ENCODE measurements at regions of chr4 and their contacts with region 1.

Region 1: DNA sequence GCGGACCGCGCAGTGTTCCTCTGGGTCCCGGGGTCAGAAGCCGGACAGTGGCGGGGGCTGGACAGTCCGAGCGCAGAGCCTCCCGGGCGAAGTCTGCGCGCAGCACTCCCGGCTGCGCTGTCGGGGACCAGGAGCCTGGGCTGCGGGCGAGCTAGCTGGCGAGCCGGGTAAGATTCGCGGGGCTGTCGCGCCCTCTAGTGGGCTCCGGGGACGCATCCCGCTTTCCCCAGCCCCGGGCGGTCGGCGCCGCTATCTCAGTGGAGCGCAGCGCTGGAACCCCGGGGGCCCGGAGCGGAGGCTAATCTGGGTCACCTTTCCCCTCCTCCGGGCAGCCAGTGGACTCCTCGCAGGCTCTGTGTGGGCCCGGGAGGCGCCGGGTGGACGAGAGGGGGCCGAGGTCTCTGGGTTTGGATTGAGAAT is 4.2 kb downstream of the PDGFRA start:
- DNase-seq: peak; percentile 42 to 81 (median 71)
- ATAC-seq: peak; percentile 78
- H3K4me3 ChIP-seq: peak overlapping the region; percentile 42 to 47
- H3K4me3 Mint-ChIP-seq: peak overlapping the region; percentile 86
- H3K27ac ChIP-seq: no peak overlapping the region
- H3K27ac Mint-ChIP-seq: no peak overlapping the region
- H3K4me1 ChIP-seq: peaks cover 36% of the 10 kb centered on the region
- H3K4me1 Mint-ChIP-seq: peaks cover 23% of the 10 kb centered on the region
- H3K27me3 ChIP-seq: peaks cover 18 to 28% of the 10 kb centered on the region in 2 experiments
- H3K27me3 Mint-ChIP-seq: peaks cover 57% of the 10 kb centered on the region
- CTCF ChIP-seq: peak; percentile 67

Region 2: GRCh38 chr4:52376132-52376704 is 1857.1 kb before region 1 on chr4:
- CTCF ChIA-PET with region 1: interaction called, 18 read pairs
- POLR2A ChIA-PET with region 1: no interaction called
- intact Hi-C with region 1: loop called in 1 of 2 experiments (anchors 2 kb)
- DNase-seq: peak in 2 of 9 experiments; percentile 33 to 39
- ATAC-seq: no peak
- H3K4me3 ChIP-seq: no peak overlapping the region
- H3K4me3 Mint-ChIP-seq: no peak overlapping the region
- H3K27ac ChIP-seq: no peak overlapping the region
- H3K27ac Mint-ChIP-seq: no peak overlapping the region
- H3K4me1 ChIP-seq: no peaks in the 10 kb centered on the region
- H3K4me1 Mint-ChIP-seq: no peaks in the 10 kb centered on the region
- H3K27me3 ChIP-seq: no peaks in the 10 kb centered on the region
- H3K27me3 Mint-ChIP-seq: peaks cover 7% of the 10 kb centered on the region
- CTCF ChIP-seq: peak; percentile 71

Region 3: DNA sequence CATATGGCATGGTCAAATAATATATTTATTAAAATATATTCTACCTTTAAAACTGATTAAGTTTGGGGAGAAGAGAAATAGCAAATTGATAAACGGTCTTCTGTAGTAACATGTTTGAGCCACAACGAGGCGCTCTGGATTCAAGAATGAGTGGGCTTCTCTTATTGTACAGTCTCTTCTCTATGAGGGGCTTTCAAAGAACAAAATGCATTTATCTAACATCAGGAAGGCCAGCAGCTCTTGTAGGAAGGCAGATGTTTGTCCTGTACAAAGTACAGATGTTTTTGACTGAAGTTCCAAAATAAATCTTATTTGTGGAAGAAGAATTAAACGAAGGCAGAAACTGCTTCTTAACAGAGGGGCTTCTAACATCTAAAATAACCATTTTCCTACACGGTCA is 1217.6 kb before region 1 on chr4:
- CTCF ChIA-PET with region 1: interaction called, 3 read pairs
- POLR2A ChIA-PET with region 1: no interaction called
- intact Hi-C with region 1: loop called (anchors 5 to 10 kb)
- DNase-seq: peak in 1 of 9 experiments; percentile 13
- ATAC-seq: no peak
- H3K4me3 ChIP-seq: no peak overlapping the region
- H3K4me3 Mint-ChIP-seq: no peak overlapping the region
- H3K27ac ChIP-seq: no peak overlapping the region
- H3K27ac Mint-ChIP-seq: no peak overlapping the region
- H3K4me1 ChIP-seq: peaks cover 12% of the 10 kb centered on the region
- H3K4me1 Mint-ChIP-seq: peaks cover 34% of the 10 kb centered on the region
- H3K27me3 ChIP-seq: no peaks in the 10 kb centered on the region
- H3K27me3 Mint-ChIP-seq: no peaks in the 10 kb centered on the region
- CTCF ChIP-seq: no peak

Region 4: GRCh38 chr4:53490965-53491622 is 742.2 kb before region 1 on chr4:
- CTCF ChIA-PET with region 1: no interaction called
- POLR2A ChIA-PET with region 1: no interaction called
- intact Hi-C with region 1: loop called in 1 of 2 experiments (anchors 5 kb)
- DNase-seq: no peak
- ATAC-seq: no peak
- H3K4me3 ChIP-seq: no peak overlapping the region
- H3K4me3 Mint-ChIP-seq: no peak overlapping the region
- H3K27ac ChIP-seq: no peak overlapping the region
- H3K27ac Mint-ChIP-seq: no peak overlapping the region
- H3K4me1 ChIP-seq: no peaks in the 10 kb centered on the region
- H3K4me1 Mint-ChIP-seq: no peaks in the 10 kb centered on the region
- H3K27me3 ChIP-seq: no peaks in the 10 kb centered on the region
- H3K27me3 Mint-ChIP-seq: peaks cover 5% of the 10 kb centered on the region
- CTCF ChIP-seq: peak; percentile 20

Region 5: DNA sequence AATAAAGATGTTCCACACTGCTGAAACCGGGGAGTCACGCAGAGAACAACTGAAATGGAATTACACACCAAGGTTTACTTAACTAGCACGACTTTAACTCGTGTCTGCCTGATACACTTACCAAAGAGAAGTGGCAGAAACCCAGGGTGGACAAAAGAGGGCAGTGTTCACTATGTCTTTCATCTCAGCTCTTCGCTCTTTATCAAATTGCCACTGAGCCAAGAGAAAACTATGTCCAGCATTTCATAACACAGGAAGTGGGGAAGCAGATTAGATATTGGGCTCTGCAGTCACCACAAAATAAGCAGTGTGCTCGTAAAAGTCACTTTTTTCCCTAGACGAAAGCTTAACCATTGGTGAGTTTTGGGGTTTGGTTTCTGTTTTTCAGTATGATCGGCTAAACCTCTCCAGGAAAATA is 324.6 kb before region 1 on chr4:
- CTCF ChIA-PET with region 1: interaction called, 45 read pairs
- POLR2A ChIA-PET with region 1: no interaction called
- intact Hi-C with region 1: loop called in 1 of 2 experiments (anchors 1 kb)
- DNase-seq: peak in 2 of 9 experiments; percentile 31 to 48
- ATAC-seq: no peak
- H3K4me3 ChIP-seq: no peak overlapping the region
- H3K4me3 Mint-ChIP-seq: no peak overlapping the region
- H3K27ac ChIP-seq: no peak overlapping the region
- H3K27ac Mint-ChIP-seq: no peak overlapping the region
- H3K4me1 ChIP-seq: peaks cover 7% of the 10 kb centered on the region
- H3K4me1 Mint-ChIP-seq: peaks cover 13% of the 10 kb centered on the region
- H3K27me3 ChIP-seq: peaks cover 0 to 8% of the 10 kb centered on the region in 2 experiments
- H3K27me3 Mint-ChIP-seq: peaks cover 47% of the 10 kb centered on the region
- CTCF ChIP-seq: no peak

Region 6: DNA sequence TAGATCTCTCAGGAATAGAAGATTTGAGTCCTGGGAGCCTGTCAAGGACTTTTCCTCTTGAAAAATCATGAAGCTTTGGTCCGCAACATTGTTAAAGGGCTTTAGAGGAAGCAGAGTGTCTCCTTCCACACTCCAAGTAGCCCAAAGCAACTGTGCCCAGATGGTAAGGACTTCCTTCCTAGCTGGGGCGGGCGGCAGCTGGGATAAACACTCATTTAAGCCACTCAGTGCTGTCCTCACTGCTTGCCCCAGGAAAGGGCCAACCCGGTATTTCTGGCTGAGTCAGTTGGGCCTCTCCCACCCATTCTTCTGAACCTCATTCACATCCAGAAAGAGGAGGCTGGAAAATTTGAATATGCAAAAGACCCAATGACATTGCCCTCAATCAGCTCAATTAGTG is 313.2 kb before region 1 on chr4:
- CTCF ChIA-PET with region 1: interaction called, 24 read pairs
- POLR2A ChIA-PET with region 1: no interaction called
- intact Hi-C with region 1: no loop called
- DNase-seq: no peak
- ATAC-seq: no peak
- H3K4me3 ChIP-seq: no peak overlapping the region
- H3K4me3 Mint-ChIP-seq: no peak overlapping the region
- H3K27ac ChIP-seq: no peak overlapping the region
- H3K27ac Mint-ChIP-seq: no peak overlapping the region
- H3K4me1 ChIP-seq: no peaks in the 10 kb centered on the region
- H3K4me1 Mint-ChIP-seq: no peaks in the 10 kb centered on the region
- H3K27me3 ChIP-seq: no peaks in the 10 kb centered on the region
- H3K27me3 Mint-ChIP-seq: peaks cover 11% of the 10 kb centered on the region
- CTCF ChIP-seq: no peak

Region 7: GRCh38 chr4:54209617-54210016 is 23.7 kb before region 1 on chr4:
- CTCF ChIA-PET with region 1: interaction called, 10 read pairs
- POLR2A ChIA-PET with region 1: no interaction called
- intact Hi-C with region 1: no loop called
- DNase-seq: no peak
- ATAC-seq: no peak
- H3K4me3 ChIP-seq: no peak overlapping the region
- H3K4me3 Mint-ChIP-seq: no peak overlapping the region
- H3K27ac ChIP-seq: no peak overlapping the region
- H3K27ac Mint-ChIP-seq: no peak overlapping the region
- H3K4me1 ChIP-seq: no peaks in the 10 kb centered on the region
- H3K4me1 Mint-ChIP-seq: no peaks in the 10 kb centered on the region
- H3K27me3 ChIP-seq: peaks cover 0 to 7% of the 10 kb centered on the region in 2 experiments
- H3K27me3 Mint-ChIP-seq: peaks cover 17% of the 10 kb centered on the region
- CTCF ChIP-seq: no peak

Region 8: GRCh38 chr4:54898656-54899340 is 665.5 kb after region 1 on chr4:
- CTCF ChIA-PET with region 1: no interaction called
- POLR2A ChIA-PET with region 1: no interaction called
- intact Hi-C with region 1: no loop called
- DNase-seq: no peak
- ATAC-seq: no peak
- H3K4me3 ChIP-seq: no peak overlapping the region
- H3K4me3 Mint-ChIP-seq: no peak overlapping the region
- H3K27ac ChIP-seq: no peak overlapping the region
- H3K27ac Mint-ChIP-seq: no peak overlapping the region
- H3K4me1 ChIP-seq: no peaks in the 10 kb centered on the region
- H3K4me1 Mint-ChIP-seq: peaks cover 3% of the 10 kb centered on the region
- H3K27me3 ChIP-seq: no peaks in the 10 kb centered on the region
- H3K27me3 Mint-ChIP-seq: no peaks in the 10 kb centered on the region
- CTCF ChIP-seq: no peak